HEK293 (cell line): ENCODE measurements at regions of chr6 and their contacts with region 1.

Region 1: GRCh38 chr6:138115877-138116660 is 8.8 kb upstream of the PERP start:
- H3K4me3 ChIP-seq: no peak overlapping the region
- H3K27ac ChIP-seq: no peak overlapping the region
- H3K4me1 ChIP-seq: no peaks in the 10 kb centered on the region
- CTCF ChIP-seq: peak; percentile 57; the same call in 1 of the 2 replicates

Region 2: GRCh38 chr6:138007014-138007472 is 109.0 kb before region 1 on chr6:
- CTCF ChIA-PET with region 1: interaction called, 23 read pairs
- POLR2A ChIA-PET with region 1: no interaction called
- H3K4me3 ChIP-seq: no peak overlapping the region
- H3K27ac ChIP-seq: no peak overlapping the region
- H3K4me1 ChIP-seq: no peaks in the 10 kb centered on the region
- CTCF ChIP-seq: peak; percentile 48; the same call in 1 of the 2 replicates

Region 3: GRCh38 chr6:138287144-138287955 is 171.3 kb after region 1 on chr6:
- CTCF ChIA-PET with region 1: interaction called, 14 read pairs
- POLR2A ChIA-PET with region 1: no interaction called
- H3K4me3 ChIP-seq: no peak overlapping the region
- H3K27ac ChIP-seq: no peak overlapping the region
- H3K4me1 ChIP-seq: no peaks in the 10 kb centered on the region
- CTCF ChIP-seq: peak; percentile 20; the same call in 1 of the 2 replicates

Region 4: GRCh38 chr6:138428944-138429598 is 313.0 kb after region 1 on chr6:
- CTCF ChIA-PET with region 1: interaction called, 11 read pairs
- POLR2A ChIA-PET with region 1: no interaction called
- H3K4me3 ChIP-seq: no peak overlapping the region
- H3K27ac ChIP-seq: no peak overlapping the region
- H3K4me1 ChIP-seq: no peaks in the 10 kb centered on the region
- CTCF ChIP-seq: peak; percentile 39

Region 5: DNA sequence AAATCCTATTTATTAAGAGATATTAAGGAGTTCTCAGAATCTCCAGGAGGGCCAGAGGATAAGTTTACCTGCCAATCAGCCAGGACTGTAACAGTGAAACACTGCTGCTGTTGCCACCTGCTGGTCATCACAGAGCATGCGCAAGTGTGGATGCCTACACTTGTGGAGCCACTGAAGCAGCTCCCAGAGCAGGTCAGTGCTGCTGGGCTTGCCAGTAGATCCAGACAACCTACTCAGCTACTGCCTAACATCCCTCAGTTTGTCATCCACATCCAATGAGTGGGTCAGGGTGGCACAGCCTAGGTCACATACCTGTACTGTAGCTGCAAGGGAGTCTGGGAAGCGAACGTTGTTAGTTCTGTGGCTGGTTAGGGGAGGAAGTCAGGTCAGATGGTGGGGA is 401.6 kb after region 1 on chr6:
- CTCF ChIA-PET with region 1: interaction called, 56 read pairs
- POLR2A ChIA-PET with region 1: no interaction called
- H3K4me3 ChIP-seq: no peak overlapping the region
- H3K27ac ChIP-seq: no peak overlapping the region
- H3K4me1 ChIP-seq: no peaks in the 10 kb centered on the region
- CTCF ChIP-seq: no peak

Region 6: DNA sequence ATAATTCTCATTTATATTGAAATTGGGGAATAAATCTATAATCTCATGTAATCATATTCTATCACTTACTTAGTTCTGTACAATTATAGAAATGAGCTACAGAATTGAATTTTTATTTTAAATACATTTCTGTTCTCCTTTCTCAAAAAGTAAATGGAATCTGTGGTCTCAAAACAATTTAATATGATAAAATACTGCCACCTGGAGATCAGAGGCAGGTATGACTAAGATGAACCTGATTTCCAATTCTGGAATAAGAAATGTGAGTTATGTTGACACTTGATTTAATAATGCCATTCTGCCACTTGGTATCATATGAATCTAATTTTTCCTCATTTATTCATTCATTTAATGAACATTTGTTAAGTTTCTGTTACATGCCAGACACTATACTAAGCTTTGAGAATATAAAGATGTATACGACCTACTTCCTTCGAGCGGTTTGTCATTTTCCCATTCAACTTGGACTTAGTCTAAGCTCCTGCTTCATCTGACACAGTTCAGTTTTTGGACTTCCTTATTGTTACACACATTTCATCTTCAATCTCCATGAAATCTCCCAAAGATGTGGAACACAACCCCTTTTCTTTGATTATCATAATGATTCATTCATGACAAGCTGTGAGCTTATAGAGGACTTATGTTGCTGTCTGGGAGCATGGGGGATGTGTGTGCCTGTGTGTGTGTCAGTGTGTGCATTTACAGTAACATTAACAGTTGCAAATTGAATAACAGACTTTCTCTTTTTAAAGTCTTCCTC is 650.0 kb after region 1 on chr6:
- CTCF ChIA-PET with region 1: interaction called, 57 read pairs
- POLR2A ChIA-PET with region 1: no interaction called
- H3K4me3 ChIP-seq: no peak overlapping the region
- H3K27ac ChIP-seq: no peak overlapping the region
- H3K4me1 ChIP-seq: no peaks in the 10 kb centered on the region
- CTCF ChIP-seq: no peak